Dorsolateral prefrontal cortex (tissue), 120 donors: ENCODE measurements at regions of chr12 and their contacts with region 1.

Region 1: DNA sequence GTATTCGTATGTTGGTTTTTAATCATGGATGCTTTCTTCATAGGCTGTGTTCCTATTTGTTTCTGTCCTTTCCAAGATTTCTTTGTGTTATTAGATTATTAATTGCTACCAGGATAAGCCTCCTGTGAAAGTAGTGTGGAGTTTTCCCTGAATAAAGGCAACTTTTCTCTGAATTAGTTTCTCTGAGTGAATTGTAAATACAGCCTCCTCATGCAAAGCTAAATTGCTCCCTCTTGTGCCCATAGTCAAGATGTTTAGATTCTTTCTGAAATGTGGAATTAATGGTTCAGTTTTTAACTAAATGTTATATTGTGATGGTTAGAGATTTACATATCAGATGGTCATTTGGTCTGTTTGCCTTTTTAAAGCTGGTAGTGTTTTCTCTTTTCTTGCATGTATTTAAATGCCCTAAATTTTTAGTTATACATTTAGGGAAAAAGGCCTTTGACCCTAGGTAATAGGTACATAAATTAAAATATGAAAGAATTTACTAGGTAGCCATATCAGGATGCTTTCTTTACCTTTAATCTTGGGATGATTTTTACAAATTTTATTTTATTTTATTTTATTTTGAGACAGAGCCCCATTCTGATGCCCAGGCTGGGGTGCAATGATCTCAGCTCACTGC is 8.9 kb downstream of the APAF1 start:
- DNase-seq: no peak
- H3K4me3 ChIP-seq: no peak overlapping the region
- H3K27ac ChIP-seq: no peak overlapping the region
- H3K27me3 ChIP-seq: no peaks in the 10 kb centered on the region
- CTCF ChIP-seq: peak in 55 of 56 donors; percentile 29 to 83 (median 64)

Region 2: GRCh38 chr12:98424726-98425401 is 229.1 kb before region 1 on chr12:
- intact Hi-C with region 1: loop called in 1 of 2 experiments (anchors 5 kb)
- DNase-seq: peak in 9 of 10 donors; percentile 38 to 77 (median 63)
- H3K4me3 ChIP-seq: peak overlapping the region in 1 of 59 donors; percentile 17
- H3K27ac ChIP-seq: no peak overlapping the region
- H3K27me3 ChIP-seq: no peaks in the 10 kb centered on the region
- CTCF ChIP-seq: peak; percentile 53 to 84 (median 73)

Region 3: DNA sequence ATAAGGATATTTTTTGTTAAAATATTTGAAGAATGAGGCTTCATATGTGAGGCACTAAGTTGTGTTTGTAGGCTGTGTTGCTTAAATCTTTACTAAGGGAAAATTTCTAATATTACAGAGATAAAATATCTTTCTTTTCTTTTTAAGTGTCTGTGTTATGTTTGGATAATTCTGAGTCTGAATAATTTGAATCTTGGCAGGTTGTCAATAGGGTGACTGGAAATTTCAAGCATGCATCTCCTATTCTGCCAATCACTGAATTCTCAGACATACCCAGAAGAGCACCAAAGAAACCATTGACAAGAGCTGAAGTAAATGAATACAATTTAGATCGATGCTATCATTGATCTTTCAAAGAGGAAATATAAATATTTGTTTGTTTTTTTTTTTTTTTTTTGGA is 109.2 kb before region 1 on chr12:
- intact Hi-C with region 1: no loop called
- DNase-seq: no peak
- H3K4me3 ChIP-seq: no peak overlapping the region
- H3K27ac ChIP-seq: no peak overlapping the region
- H3K27me3 ChIP-seq: no peaks in the 10 kb centered on the region
- CTCF ChIP-seq: no peak

Region 4: GRCh38 chr12:98572010-98572409 is 82.0 kb before region 1 on chr12:
- intact Hi-C with region 1: loop called in 1 of 2 experiments (anchors 5 kb)
- DNase-seq: no peak
- H3K4me3 ChIP-seq: no peak overlapping the region
- H3K27ac ChIP-seq: no peak overlapping the region
- H3K27me3 ChIP-seq: no peaks in the 10 kb centered on the region
- CTCF ChIP-seq: peak in 8 of 56 donors; percentile 6 to 21 (median 10)

Region 5: DNA sequence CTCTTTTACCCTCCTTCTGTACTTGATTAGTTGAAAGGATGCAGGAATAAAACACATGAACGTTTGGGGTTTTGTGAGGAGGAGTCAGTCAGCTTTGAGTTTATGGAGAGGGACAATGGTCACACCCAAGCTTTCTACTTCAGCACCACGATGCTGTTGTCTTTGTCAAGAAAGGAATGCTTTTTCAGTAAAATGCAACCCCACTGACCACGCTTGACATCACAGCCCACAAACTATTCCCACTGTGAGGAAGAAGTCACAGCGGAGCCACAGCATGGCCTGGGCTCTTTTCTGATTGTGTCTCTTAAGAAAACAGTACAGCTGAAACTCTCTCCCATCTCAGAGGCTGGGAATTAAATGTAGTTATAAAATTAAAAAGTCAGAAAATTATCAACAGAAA is 126.3 kb after region 1 on chr12:
- intact Hi-C with region 1: no loop called
- DNase-seq: no peak
- H3K4me3 ChIP-seq: no peak overlapping the region
- H3K27ac ChIP-seq: peak overlapping the region in 32 of 59 donors; percentile 2 to 64 (median 28)
- H3K27me3 ChIP-seq: no peaks in the 10 kb centered on the region
- CTCF ChIP-seq: no peak